Natural killer cell (primary cell): ENCODE measurements at regions of chr4 and their contacts with region 1.

Region 1: GRCh38 chr4:22389240-22389870 is 126.5 kb downstream of the ADGRA3 start:
- DNase-seq: peak in 1 of 2 donors; percentile 59
- ATAC-seq: peak; percentile 48 to 59 (median 57)
- H3K4me3 ChIP-seq: no peak overlapping the region
- H3K4me3 Mint-ChIP-seq: no peak overlapping the region
- H3K27ac ChIP-seq: no peak overlapping the region
- H3K27ac Mint-ChIP-seq: no peak overlapping the region
- H3K4me1 ChIP-seq: no peaks in the 10 kb centered on the region
- H3K4me1 Mint-ChIP-seq: no peaks in the 10 kb centered on the region
- H3K27me3 ChIP-seq: no peaks in the 10 kb centered on the region
- H3K27me3 Mint-ChIP-seq: no peaks in the 10 kb centered on the region
- CTCF ChIP-seq: peak; percentile 57

Region 2: DNA sequence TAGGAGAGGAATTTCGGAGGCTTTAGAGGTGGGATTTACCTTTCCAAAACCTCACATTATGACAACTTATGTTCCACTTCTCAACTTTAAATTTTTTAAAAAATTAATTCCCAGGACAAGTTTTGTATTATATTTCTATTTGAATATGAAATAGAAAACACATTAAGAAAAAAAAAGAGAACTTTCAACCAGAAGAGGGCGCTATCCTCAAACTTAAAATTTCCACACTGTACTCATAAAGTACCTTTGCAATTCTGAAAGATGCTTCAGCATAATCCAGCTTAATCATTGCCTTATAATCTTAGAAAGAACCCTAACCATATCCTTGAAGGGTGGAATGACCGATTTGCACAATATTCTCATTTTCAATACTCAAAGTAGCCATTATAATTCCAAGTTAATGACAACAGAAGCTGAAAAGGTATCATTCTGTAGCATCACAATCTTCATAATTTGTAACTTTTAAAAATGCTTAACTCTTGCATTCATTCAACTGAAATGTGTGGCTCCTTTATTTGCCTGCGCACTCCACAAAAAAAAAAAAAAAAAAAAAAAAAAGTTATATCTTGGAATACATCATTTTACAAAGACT is 598.8 kb before region 1 on chr4:
- intact Hi-C with region 1: loop called (anchors 1 kb)
- DNase-seq: peak in 1 of 2 donors; percentile 33
- ATAC-seq: no peak
- H3K4me3 ChIP-seq: no peak overlapping the region
- H3K4me3 Mint-ChIP-seq: no peak overlapping the region
- H3K27ac ChIP-seq: no peak overlapping the region
- H3K27ac Mint-ChIP-seq: no peak overlapping the region
- H3K4me1 ChIP-seq: no peaks in the 10 kb centered on the region
- H3K4me1 Mint-ChIP-seq: no peaks in the 10 kb centered on the region
- H3K27me3 ChIP-seq: no peaks in the 10 kb centered on the region
- H3K27me3 Mint-ChIP-seq: no peaks in the 10 kb centered on the region
- CTCF ChIP-seq: peak; percentile 31